ENCODE measurements at regions of chr19 and their contacts with region 1.

Region 1: DNA sequence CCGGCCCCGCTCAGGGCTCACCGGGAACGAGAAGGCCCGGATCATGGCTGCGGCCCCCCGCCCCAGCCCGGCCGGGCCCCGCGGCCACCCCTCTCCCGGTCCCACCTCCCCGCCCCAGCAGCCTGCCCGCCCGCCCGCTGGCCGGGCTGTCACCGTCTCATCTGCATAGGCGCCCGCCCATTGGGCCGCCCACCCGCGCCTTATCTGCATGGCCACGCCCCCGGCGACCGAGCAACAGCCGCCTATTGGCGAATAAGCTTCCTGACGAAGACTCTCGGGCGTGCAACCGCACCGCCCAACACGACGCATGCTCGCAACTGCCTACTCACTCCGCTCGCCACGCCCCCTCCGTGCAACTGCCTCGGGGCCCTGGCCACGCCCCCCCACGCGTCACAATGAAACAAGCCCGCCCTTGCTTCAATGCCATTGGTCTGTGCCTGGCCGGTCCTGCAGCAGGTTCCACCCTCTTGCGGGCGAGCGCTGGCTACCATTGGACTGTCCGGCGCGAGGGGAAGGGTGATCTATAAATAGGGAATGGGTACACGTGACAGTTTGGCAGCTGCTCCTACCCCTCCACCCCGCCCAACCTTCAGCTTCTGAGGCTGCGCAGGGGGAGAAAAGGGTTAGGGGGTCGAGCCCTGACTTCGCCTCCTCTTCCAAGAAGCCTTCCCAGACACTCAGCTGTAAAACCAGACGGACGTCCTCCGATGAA is at the start of gene DACT3:
- DNase-seq: peak; percentile 98
- ATAC-seq: peak; percentile 95
- H3K4me3 ChIP-seq: peak within 1 kb of the TSS; percentile 52 to 64 (median 54)
- H3K27ac ChIP-seq: no peak within 1 kb of the TSS
- H3K4me1 ChIP-seq: peaks cover 37% of the 10 kb centered on the region
- H3K27me3 ChIP-seq: peaks cover 4 to 23% of the 10 kb centered on the region in 2 experiments; a peak in 3 of 5 replicates
- CTCF ChIP-seq: peak; percentile 2; the same call in 1 of the 2 replicates
- EP300 ChIP-seq: no peak
- POLR2A ChIP-seq: no peak
- RAD21 ChIP-seq: no peak
- total RNA-seq, gene DACT3: 0.04 TPM in 1 of 2 replicates, not detected in the other

Region 2: GRCh38 chr19:46614114-46614722 is 47.0 kb before region 1 on chr19:
- CTCF ChIA-PET with region 1: interaction called, 34 read pairs
- POLR2A ChIA-PET with region 1: interaction called, 8 read pairs
- in situ Hi-C with region 1: loop called (anchors 10 kb)
- intact Hi-C with region 1: loop called (anchors 1 kb)
- DNase-seq: peak; percentile 61
- ATAC-seq: peak; percentile 82
- H3K4me3 ChIP-seq: peak overlapping the region in 1 of 3 experiments; percentile 13; a peak in 1 of 6 replicates
- H3K27ac ChIP-seq: no peak overlapping the region
- H3K4me1 ChIP-seq: peaks cover 14% of the 10 kb centered on the region
- H3K27me3 ChIP-seq: peaks cover 0 to 13% of the 10 kb centered on the region in 2 experiments; a peak in 3 of 5 replicates
- CTCF ChIP-seq: peak; percentile 88
- EP300 ChIP-seq: no peak
- POLR2A ChIP-seq: no peak
- RAD21 ChIP-seq: peak; percentile 72

Region 3: DNA sequence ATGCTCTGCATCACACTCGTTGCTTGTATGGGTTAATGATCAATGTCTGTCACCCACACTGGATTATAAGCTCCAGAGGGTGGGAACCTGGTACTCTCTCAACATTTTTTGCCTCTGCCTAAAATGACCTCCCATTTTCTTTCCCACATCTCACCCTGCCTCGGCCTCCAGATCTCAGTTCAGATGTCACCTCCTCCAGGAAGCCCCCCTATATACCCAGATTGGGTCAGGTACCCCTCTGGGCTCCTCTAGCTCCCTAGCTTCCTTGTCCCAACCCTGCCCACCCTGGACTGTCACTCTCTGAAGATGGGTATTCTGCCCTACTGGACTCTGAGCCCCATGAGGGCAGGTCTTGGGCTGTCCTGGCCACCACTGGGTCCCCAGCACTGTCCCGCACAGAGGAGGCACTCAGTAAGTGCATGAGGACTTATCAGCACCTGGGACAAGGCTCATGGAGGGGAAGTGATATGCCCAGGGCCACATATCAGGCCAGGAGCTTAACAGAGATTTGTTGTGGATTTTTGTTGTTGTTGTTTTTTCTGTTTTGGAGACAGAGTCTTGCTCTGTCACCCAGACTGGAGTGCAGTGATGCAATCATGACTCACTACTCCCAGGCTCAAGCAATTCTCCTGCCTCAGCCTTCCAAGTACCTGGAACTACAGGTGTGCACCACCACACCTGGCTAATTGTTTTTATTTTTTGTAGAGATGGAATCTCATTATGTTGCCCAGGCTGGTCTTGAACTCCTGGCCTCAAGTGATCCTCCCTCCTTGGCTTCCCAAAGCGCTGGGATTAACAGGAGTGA is 31.9 kb after region 1 on chr19:
- CTCF ChIA-PET with region 1: no interaction called
- POLR2A ChIA-PET with region 1: no interaction called
- in situ Hi-C with region 1: no loop called
- intact Hi-C with region 1: no loop called
- DNase-seq: no peak
- ATAC-seq: no peak
- H3K4me3 ChIP-seq: no peak overlapping the region
- H3K27ac ChIP-seq: no peak overlapping the region
- H3K4me1 ChIP-seq: no peaks in the 10 kb centered on the region
- H3K27me3 ChIP-seq: no peaks in the 10 kb centered on the region
- CTCF ChIP-seq: no peak
- EP300 ChIP-seq: no peak
- POLR2A ChIP-seq: no peak
- RAD21 ChIP-seq: no peak